ENCODE measurements at regions of chr12 and their contacts with region 1.

Region 1: GRCh38 chr12:9707864-9708808 is 24.8 kb downstream of the CLECL1 start:
- DNase-seq: peak in 1 of 2 donors; percentile 68
- ATAC-seq: peak; percentile 76
- H3K4me3 ChIP-seq: no peak overlapping the region
- H3K27ac ChIP-seq: no peak overlapping the region
- H3K4me1 ChIP-seq: no peaks in the 10 kb centered on the region
- H3K27me3 ChIP-seq: no peaks in the 10 kb centered on the region

Region 2: GRCh38 chr12:9331218-9331626 is 376.9 kb before region 1 on chr12:
- intact Hi-C with region 1: loop called in 1 of 2 experiments (anchors 5 kb)
- DNase-seq: peak; percentile 68 to 84
- ATAC-seq: peak; percentile 77
- H3K4me3 ChIP-seq: no peak overlapping the region
- H3K27ac ChIP-seq: no peak overlapping the region
- H3K4me1 ChIP-seq: no peaks in the 10 kb centered on the region
- H3K27me3 ChIP-seq: no peaks in the 10 kb centered on the region

Region 3: GRCh38 chr12:9634177-9634803 is 73.8 kb before region 1 on chr12:
- intact Hi-C with region 1: loop called in 1 of 2 experiments (anchors 1 kb)
- DNase-seq: peak in 1 of 2 donors; percentile 54
- ATAC-seq: no peak
- H3K4me3 ChIP-seq: no peak overlapping the region
- H3K27ac ChIP-seq: no peak overlapping the region
- H3K4me1 ChIP-seq: no peaks in the 10 kb centered on the region
- H3K27me3 ChIP-seq: no peaks in the 10 kb centered on the region

Region 4: GRCh38 chr12:9669534-9669933 is 38.6 kb before region 1 on chr12 and contains the start of gene CLEC2D:
- intact Hi-C with region 1: no loop called
- DNase-seq: no peak
- ATAC-seq: no peak
- H3K4me3 ChIP-seq: no peak within 1 kb of the TSS
- H3K27ac ChIP-seq: no peak within 1 kb of the TSS
- H3K4me1 ChIP-seq: no peaks in the 10 kb centered on the region
- H3K27me3 ChIP-seq: no peaks in the 10 kb centered on the region
- total RNA-seq, gene CLEC2D: 16.0 to 36.5 TPM

Region 5: DNA sequence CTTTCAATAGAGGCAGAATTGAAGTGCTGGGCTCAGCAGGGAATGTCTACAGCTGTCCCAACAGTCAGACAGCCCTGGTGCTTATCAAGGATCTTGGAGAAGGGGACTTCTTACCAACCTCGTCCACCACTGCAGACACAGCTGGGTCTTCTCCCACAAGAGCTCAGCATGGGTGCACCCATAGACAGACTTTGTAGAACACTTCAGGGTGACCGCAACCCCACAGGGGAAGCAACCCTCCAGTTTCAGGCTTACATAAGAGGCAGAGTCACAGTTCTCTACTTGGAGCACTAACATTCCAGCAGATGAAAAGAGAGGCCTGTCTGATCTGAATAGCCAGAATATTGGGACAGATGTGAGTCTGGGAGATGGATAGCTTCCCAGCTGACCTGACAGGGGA is 394.2 kb after region 1 on chr12:
- intact Hi-C with region 1: no loop called
- DNase-seq: peak in 1 of 2 donors; percentile 62
- ATAC-seq: peak; percentile 34
- H3K4me3 ChIP-seq: no peak overlapping the region
- H3K27ac ChIP-seq: no peak overlapping the region
- H3K4me1 ChIP-seq: no peaks in the 10 kb centered on the region
- H3K27me3 ChIP-seq: no peaks in the 10 kb centered on the region